Left lung (tissue), 14 donors: ENCODE measurements at regions of chr16 and their contacts with region 1.

Region 1: DNA sequence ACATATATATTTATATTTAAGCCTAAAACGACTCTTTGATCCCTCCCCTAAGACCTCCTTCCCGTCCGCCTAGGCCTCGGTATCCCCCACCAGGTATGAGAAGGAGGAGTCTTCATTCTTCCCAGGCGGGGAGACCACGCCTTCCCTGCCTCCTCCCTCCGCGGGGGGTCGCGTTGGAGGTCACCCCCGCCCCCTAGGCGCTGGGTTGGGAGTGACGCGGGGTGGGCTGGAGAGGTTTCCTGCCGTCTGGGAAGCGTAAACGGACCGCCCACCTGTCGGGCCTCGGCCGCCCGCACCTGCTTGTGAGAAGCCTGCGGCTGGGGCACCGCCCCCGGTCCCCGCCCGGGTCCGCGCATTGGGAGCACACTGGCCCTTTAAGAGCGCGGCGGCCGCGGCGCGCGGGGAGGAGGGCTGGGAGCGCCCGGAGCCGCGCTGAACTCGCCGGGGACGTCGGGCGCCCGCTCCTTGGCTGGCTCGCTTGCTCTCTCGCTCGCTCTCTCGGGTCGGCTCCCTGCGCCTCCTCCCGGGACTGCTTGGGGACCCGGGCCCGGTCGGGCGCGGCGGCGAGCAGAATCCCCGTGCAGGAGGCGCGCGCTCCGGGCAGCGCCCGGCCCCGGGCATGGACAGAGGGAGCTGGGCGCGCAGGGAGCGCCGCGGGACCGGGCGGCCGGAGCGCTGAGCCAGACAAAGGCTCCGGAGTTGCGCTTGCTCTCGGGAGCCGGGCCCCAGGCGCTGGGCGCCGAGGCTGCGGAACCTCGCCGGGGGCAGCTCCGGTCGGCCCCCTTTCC is at the start of gene MMP15:
- DNase-seq: peak; percentile 60 to 95 (median 86)
- ATAC-seq: peak; percentile 76
- H3K4me3 ChIP-seq: peak within 1 kb of the TSS; percentile 66 to 68
- H3K27ac ChIP-seq: peak within 1 kb of the TSS; percentile 79 to 80
- H3K4me1 ChIP-seq: peaks cover 23 to 80% of the 10 kb centered on the region in 2 donors
- H3K27me3 ChIP-seq: peaks cover 0 to 45% of the 10 kb centered on the region in 2 donors
- CTCF ChIP-seq: no peak
- polyA plus RNA-seq, gene MMP15: 42.0 to 63.5 (median 48.7) TPM

Region 2: GRCh38 chr16:57984331-57985203 is 41.0 kb before region 1 on chr16:
- intact Hi-C with region 1: no loop called
- DNase-seq: peak; percentile 48 to 97 (median 90)
- ATAC-seq: peak; percentile 98
- H3K4me3 ChIP-seq: peak overlapping the region; percentile 44 to 53
- H3K27ac ChIP-seq: no peak overlapping the region
- H3K4me1 ChIP-seq: peaks cover 11 to 13% of the 10 kb centered on the region in 2 donors
- H3K27me3 ChIP-seq: peaks cover 0 to 19% of the 10 kb centered on the region in 2 donors
- CTCF ChIP-seq: no peak

Region 3: DNA sequence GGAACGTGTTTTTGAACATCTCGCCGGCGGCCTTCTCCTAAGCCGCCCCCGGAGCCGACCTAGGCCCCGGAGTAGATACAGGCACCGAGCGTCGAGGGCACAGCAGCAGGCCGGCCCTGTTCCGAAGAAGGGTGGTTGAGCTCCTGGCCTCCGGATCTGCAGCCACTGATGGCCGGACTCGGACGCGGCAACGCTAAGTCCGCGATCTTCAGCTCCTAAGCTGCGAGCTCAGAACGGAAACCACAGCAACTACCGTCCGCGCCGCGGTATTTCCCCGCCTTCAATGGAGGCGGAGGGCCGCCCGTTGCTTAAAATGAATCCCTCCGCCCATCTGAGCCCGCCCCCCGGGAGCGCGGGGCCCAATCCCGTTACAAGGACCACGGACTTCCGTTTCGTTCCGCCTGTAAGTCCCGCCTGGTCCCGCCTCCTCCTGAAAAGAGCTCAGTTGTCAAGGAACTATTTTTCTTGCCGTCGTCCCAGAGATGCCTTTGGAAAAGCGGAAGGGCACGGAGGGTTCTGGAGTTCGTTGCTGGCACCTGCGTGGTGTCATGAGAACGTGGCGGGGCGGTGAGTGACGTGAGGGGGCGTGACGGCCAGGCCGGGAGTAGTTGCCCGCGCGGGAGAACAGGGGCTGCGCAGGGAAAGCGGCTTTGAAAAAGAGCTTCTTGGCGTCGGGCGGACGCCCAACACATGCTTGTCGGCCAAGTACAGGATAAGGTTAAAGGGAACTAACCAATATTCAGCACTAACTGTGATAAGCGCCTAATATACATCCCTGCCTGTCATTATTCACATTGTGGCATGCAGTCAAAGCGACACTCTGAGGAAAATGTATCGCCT is 103.8 kb after region 1 on chr16 and contains the start of gene CFAP20:
- intact Hi-C with region 1: loop called (anchors 5 to 10 kb)
- DNase-seq: peak; percentile 98 to 99 (median 98)
- ATAC-seq: peak; percentile 97
- H3K4me3 ChIP-seq: peak within 1 kb of the TSS; percentile 81 to 86
- H3K27ac ChIP-seq: peak within 1 kb of the TSS; percentile 85 to 90
- H3K4me1 ChIP-seq: peaks cover 21 to 40% of the 10 kb centered on the region in 2 donors
- H3K27me3 ChIP-seq: no peaks in the 10 kb centered on the region
- CTCF ChIP-seq: no peak
- polyA plus RNA-seq, gene CFAP20: 66.4 to 86.5 (median 76.7) TPM

Region 4: DNA sequence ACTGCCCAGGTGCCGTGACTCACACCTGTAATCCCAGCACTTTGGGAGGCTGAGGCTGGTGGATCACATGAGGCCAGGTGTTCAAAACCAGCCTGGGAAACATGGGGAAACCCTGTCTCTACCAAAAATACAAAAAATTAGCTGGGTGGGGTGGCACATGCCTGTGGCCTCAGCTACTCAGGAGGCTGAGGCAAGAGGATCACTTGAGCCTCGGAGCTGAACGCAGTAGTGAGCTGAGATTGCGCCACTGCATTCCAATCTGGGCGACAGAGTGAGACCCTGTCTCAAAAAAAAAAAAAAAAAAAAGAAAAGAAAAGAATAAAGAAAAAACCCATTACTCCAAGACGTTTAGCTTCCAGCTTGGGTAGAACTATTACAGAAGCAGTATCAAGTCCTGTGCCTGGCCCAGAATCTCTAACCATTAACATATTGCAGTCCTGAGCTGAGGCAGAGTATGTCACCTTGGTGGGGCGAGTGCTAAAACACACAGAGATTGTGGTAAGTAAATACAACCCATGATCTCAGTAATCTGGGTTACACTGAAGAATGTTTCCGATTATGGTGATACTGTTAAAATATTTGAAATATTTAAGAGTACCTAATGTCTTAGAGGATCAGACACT is 126.8 kb after region 1 on chr16:
- intact Hi-C with region 1: no loop called
- DNase-seq: no peak
- ATAC-seq: no peak
- H3K4me3 ChIP-seq: no peak overlapping the region
- H3K27ac ChIP-seq: no peak overlapping the region
- H3K4me1 ChIP-seq: no peaks in the 10 kb centered on the region
- H3K27me3 ChIP-seq: no peaks in the 10 kb centered on the region
- CTCF ChIP-seq: no peak

Region 5: GRCh38 chr16:58198022-58198683 is 172.6 kb after region 1 on chr16 and contains the start of gene CSNK2A2:
- intact Hi-C with region 1: loop called in 1 of 2 experiments (anchors 5 kb)
- DNase-seq: peak; percentile 45 to 94 (median 72)
- ATAC-seq: peak; percentile 96
- H3K4me3 ChIP-seq: peak within 1 kb of the TSS; percentile 71 to 78
- H3K27ac ChIP-seq: peak within 1 kb of the TSS in 1 of 2 donors; percentile 37
- H3K4me1 ChIP-seq: peaks cover 7 to 26% of the 10 kb centered on the region in 2 donors
- H3K27me3 ChIP-seq: no peaks in the 10 kb centered on the region
- CTCF ChIP-seq: peak in 1 of 2 donors; percentile 33
- polyA plus RNA-seq, gene CSNK2A2: 61.1 to 84.6 (median 74.6) TPM